ENCODE measurements at regions of chr17 and their contacts with region 1.

Region 1: GRCh38 chr17:35747540-35748017 is 5.5 kb downstream of the GAS2L2 start:
- DNase-seq: peak; percentile 88
- H3K4me3 ChIP-seq: no peak overlapping the region
- H3K27ac ChIP-seq: no peak overlapping the region
- H3K4me1 ChIP-seq: peaks cover 0 to 13% (median 9%) of the 10 kb centered on the region in 4 donors
- H3K27me3 ChIP-seq: peaks cover 30 to 79% (median 55%) of the 10 kb centered on the region in 3 donors
- CTCF ChIP-seq: peak; percentile 85 to 90 (median 87)
- EP300 ChIP-seq: no peak
- POLR2A ChIP-seq: no peak

Region 2: GRCh38 chr17:35161281-35161761 is 586.3 kb before region 1 on chr17:
- intact Hi-C with region 1: loop called (anchors 10 kb)
- DNase-seq: no peak
- H3K4me3 ChIP-seq: no peak overlapping the region
- H3K27ac ChIP-seq: no peak overlapping the region
- H3K4me1 ChIP-seq: no peaks in the 10 kb centered on the region
- H3K27me3 ChIP-seq: no peaks in the 10 kb centered on the region
- CTCF ChIP-seq: no peak
- EP300 ChIP-seq: no peak
- POLR2A ChIP-seq: no peak

Region 3: GRCh38 chr17:35312790-35313711 is 434.5 kb before region 1 on chr17:
- intact Hi-C with region 1: loop called (anchors 5 kb)
- DNase-seq: peak; percentile 75
- H3K4me3 ChIP-seq: peak overlapping the region in 3 of 4 donors; percentile 30 to 40 (median 34)
- H3K27ac ChIP-seq: peak overlapping the region in 3 of 4 donors; percentile 10 to 53 (median 43)
- H3K4me1 ChIP-seq: peaks cover 0 to 30% (median 26%) of the 10 kb centered on the region in 4 donors
- H3K27me3 ChIP-seq: peaks cover 0 to 8% (median 0%) of the 10 kb centered on the region in 3 donors
- CTCF ChIP-seq: peak; percentile 65 to 75 (median 71)
- EP300 ChIP-seq: no peak
- POLR2A ChIP-seq: no peak

Region 4: DNA sequence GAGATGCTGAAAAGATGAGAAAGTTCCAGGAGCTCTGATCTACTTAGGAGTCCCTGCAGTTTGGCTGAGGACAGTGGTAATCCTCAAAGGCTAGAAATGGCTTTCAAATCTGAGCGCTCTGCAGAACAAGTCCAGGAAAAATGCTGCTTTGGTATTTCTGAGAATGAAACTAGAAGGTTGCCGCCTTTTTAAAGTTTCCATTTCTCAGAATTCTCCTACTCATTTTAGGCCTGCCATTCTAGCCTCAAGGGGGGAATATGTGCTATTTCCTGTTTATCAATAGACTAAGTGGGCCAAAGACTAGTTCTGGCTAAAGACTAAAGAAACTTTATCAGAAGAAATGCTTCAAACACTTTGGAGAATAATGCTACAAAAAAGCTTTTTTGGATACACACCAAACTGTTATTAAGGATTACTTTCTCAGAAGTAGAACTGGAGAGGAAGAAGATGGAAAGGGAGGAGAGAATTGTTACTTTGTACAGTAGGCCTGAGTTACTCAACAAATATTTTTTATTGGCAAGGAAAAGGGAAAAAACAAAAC is 209.9 kb before region 1 on chr17 and contains the start of gene SLFN12L:
- intact Hi-C with region 1: loop called (anchors 10 kb)
- DNase-seq: no peak
- H3K4me3 ChIP-seq: no peak within 1 kb of the TSS
- H3K27ac ChIP-seq: peak within 1 kb of the TSS in 2 of 4 donors; percentile 16 to 39
- H3K4me1 ChIP-seq: peaks cover 0 to 22% (median 0%) of the 10 kb centered on the region in 4 donors
- H3K27me3 ChIP-seq: no peaks in the 10 kb centered on the region
- CTCF ChIP-seq: no peak
- EP300 ChIP-seq: no peak
- POLR2A ChIP-seq: no peak
- total RNA-seq, gene SLFN12L: 0.27 to 1.2 (median 0.63) TPM

Region 5: DNA sequence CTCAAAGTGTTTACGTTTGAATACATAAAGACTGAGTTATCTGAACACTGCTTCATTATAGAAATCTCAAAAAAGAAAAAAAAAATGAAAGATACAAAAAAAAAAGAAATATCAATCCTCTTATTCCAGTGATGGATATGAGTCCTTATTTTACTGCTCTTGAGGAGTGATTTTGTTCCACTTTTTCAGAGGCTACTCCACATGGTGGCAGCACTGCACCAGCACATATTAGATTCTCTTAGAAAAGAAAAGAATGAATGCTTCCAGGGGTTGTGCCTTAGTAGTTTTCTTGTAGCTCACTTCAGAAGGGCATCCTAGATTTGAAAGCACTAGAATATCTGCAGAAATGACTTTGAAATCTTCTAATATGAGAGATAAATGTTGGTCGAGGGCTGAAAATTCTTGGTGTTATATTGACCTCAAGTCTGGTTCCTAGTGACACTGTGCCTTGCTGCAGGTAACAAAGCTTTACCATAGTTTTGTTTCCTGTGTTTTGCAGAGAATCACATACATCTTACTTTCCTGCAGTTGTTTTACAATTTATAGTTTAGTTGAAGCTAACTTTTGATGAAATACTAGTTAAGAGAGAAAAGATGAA is 134.6 kb before region 1 on chr17:
- intact Hi-C with region 1: loop called (anchors 5 kb)
- DNase-seq: no peak
- H3K4me3 ChIP-seq: no peak overlapping the region
- H3K27ac ChIP-seq: no peak overlapping the region
- H3K4me1 ChIP-seq: peaks cover 0 to 15% (median 3%) of the 10 kb centered on the region in 4 donors
- H3K27me3 ChIP-seq: no peaks in the 10 kb centered on the region
- CTCF ChIP-seq: peak in 2 of 4 experiments; percentile 22 to 30
- EP300 ChIP-seq: no peak
- POLR2A ChIP-seq: no peak

Region 6: GRCh38 chr17:35666967-35667532 is 80.5 kb before region 1 on chr17:
- intact Hi-C with region 1: loop called (anchors 10 kb)
- DNase-seq: no peak
- H3K4me3 ChIP-seq: no peak overlapping the region
- H3K27ac ChIP-seq: no peak overlapping the region
- H3K4me1 ChIP-seq: no peaks in the 10 kb centered on the region
- H3K27me3 ChIP-seq: no peaks in the 10 kb centered on the region
- CTCF ChIP-seq: no peak
- EP300 ChIP-seq: no peak
- POLR2A ChIP-seq: no peak